ENCODE measurements at regions of chr17 and their contacts with region 1.

Region 1: GRCh38 chr17:76345377-76345974 is 8.2 kb downstream of the PRPSAP1 start:
- DNase-seq: no peak
- H3K4me3 ChIP-seq: no peak overlapping the region
- H3K27ac ChIP-seq: no peak overlapping the region
- H3K4me1 ChIP-seq: no peaks in the 10 kb centered on the region
- H3K27me3 ChIP-seq: no peaks in the 10 kb centered on the region
- CTCF ChIP-seq: no peak
- POLR2A ChIP-seq: no peak

Region 2: DNA sequence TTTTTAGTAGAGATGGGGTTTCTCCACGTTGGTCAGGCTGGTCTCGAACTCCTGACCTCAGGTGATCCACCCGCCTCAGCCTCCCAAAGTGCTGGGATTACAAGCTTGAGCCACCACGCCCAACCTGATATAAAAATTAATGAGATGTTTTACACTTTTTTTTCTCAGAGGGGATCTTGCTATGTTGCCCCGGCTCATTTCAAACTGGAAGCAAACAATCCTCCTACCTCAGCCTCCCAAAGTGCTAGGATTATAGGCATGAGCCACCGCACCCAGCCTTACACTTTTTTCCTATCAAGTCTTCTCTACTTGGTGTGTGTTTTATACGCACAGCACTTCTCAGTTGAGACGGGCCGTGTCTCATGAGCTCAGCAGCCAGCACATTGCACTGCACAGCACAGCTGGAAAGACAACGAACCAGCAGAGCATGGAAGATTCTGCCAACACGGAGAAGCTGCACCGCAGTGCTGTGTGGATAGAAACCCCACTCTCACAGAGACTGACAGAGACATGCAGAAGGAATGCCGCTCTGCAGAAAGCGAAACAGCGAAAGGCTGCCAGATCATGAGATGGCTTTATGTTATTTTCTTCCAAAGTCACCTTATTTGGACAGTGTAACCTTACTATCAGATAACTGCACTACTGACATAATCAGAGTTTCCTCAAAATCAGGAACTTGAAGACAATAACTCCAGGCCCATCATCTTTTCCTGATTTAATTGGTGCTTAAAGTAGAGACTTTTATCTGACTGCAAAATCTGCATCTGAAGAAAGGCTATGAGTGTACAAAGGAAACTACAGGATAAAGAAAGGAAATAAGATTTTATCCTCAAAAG is 30.9 kb before region 1 on chr17:
- intact Hi-C with region 1: loop called (anchors 5 kb)
- DNase-seq: no peak
- H3K4me3 ChIP-seq: no peak overlapping the region
- H3K27ac ChIP-seq: peak overlapping the region in 2 of 4 donors; percentile 11 to 16
- H3K4me1 ChIP-seq: peaks cover 0 to 2% (median 0%) of the 10 kb centered on the region in 3 donors
- H3K27me3 ChIP-seq: no peaks in the 10 kb centered on the region
- CTCF ChIP-seq: no peak
- POLR2A ChIP-seq: no peak

Measured in esophagus squamous epithelium (tissue), 5 donors.